Activated T-helper 2 cell treated with anti-CD3 and anti-CD28 coated beads, Interferon-gamma antibody, Interleukin-2, Interleukin-4, amounts not matched to agents 10 μg/mL and 5 μg/mL and 100 μg/mL, durations not matched to agents 14 hours and 24 hours and 36 hours (primary cell): ENCODE measurements at regions of chrX and their contacts with region 1.

Region 1: DNA sequence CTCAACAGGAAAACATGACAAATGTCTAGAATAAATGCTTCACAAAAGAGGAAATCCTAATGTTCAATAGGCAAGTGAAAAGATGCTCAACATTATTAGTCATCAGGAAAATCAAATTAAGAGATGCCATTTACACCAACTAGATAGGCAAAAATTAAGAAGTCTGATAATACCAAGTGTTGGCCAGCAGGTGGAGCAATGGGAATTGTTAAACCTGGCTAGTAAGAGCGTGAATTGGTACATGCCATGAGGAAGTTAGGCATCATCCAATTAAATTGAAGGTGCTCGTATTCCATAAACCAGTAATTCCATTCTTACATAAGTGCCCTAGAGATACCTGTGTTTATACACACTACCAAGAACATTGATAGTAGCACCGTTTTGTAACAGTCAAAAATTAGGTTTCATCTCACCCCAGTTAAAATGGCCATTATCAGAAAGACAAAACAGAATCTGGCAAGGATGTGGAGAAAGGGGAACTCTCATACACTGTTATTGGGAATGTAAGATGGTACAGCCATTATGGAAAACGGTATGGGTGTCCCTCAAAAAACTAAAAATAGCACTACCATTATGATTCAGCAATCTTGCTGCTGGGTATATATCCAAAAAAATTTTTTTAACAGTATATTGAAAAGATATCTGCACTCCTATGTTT is 14.0 kb upstream of the ZCCHC18 start:
- DNase-seq: peak; percentile 10
- H3K4me3 Mint-ChIP-seq: no peak overlapping the region
- H3K27ac Mint-ChIP-seq: no peak overlapping the region
- H3K4me1 Mint-ChIP-seq: peaks cover 3% of the 10 kb centered on the region
- H3K27me3 Mint-ChIP-seq: peaks cover 18% of the 10 kb centered on the region

Region 2: GRCh38 chrX:103864886-103865534 is 233.3 kb before region 1 on chrX:
- intact Hi-C with region 1: no loop called
- DNase-seq: no peak
- H3K4me3 Mint-ChIP-seq: no peak overlapping the region
- H3K27ac Mint-ChIP-seq: no peak overlapping the region
- H3K4me1 Mint-ChIP-seq: no peaks in the 10 kb centered on the region
- H3K27me3 Mint-ChIP-seq: no peaks in the 10 kb centered on the region

Region 3: GRCh38 chrX:104113222-104113965 is 15.1 kb after region 1 on chrX:
- intact Hi-C with region 1: loop called (anchors 2 kb)
- DNase-seq: peak; percentile 26
- H3K4me3 Mint-ChIP-seq: peak overlapping the region; percentile 81
- H3K27ac Mint-ChIP-seq: no peak overlapping the region
- H3K4me1 Mint-ChIP-seq: peaks cover 24% of the 10 kb centered on the region
- H3K27me3 Mint-ChIP-seq: peaks cover 14% of the 10 kb centered on the region

Region 4: GRCh38 chrX:104136241-104137019 is 38.1 kb after region 1 on chrX:
- intact Hi-C with region 1: loop called (anchors 1 kb)
- DNase-seq: peak; percentile 14
- H3K4me3 Mint-ChIP-seq: no peak overlapping the region
- H3K27ac Mint-ChIP-seq: no peak overlapping the region
- H3K4me1 Mint-ChIP-seq: peaks cover 15% of the 10 kb centered on the region
- H3K27me3 Mint-ChIP-seq: no peaks in the 10 kb centered on the region

Region 5: GRCh38 chrX:104165894-104166737 is 67.8 kb after region 1 on chrX and contains the start of gene FAM199X:
- intact Hi-C with region 1: no loop called
- DNase-seq: peak; percentile 81
- H3K4me3 Mint-ChIP-seq: peak within 1 kb of the TSS; percentile 82
- H3K27ac Mint-ChIP-seq: peak within 1 kb of the TSS; percentile 81
- H3K4me1 Mint-ChIP-seq: peaks cover 30% of the 10 kb centered on the region
- H3K27me3 Mint-ChIP-seq: no peaks in the 10 kb centered on the region
- total RNA-seq, gene FAM199X: 10.9 and 11.9 TPM in 2 replicates